ENCODE measurements at regions of chr1 and their contacts with region 1.

Region 1: GRCh38 chr1:202184750-202185460 is 8.7 kb upstream of the LGR6 start:
- DNase-seq: peak; percentile 94
- H3K4me3 Mint-ChIP-seq: peak overlapping the region; percentile 52
- H3K27ac Mint-ChIP-seq: no peak overlapping the region
- H3K4me1 Mint-ChIP-seq: peaks cover 8% of the 10 kb centered on the region
- H3K27me3 Mint-ChIP-seq: peaks cover 88% of the 10 kb centered on the region
- CTCF ChIP-seq: peak; percentile 89

Region 2: GRCh38 chr1:202200112-202200566 is 15.2 kb after region 1 on chr1:
- CTCF ChIA-PET with region 1: interaction called, 14 read pairs
- intact Hi-C with region 1: no loop called
- DNase-seq: peak; percentile 63
- H3K4me3 Mint-ChIP-seq: no peak overlapping the region
- H3K27ac Mint-ChIP-seq: peak overlapping the region; percentile 34
- H3K4me1 Mint-ChIP-seq: peaks cover 37% of the 10 kb centered on the region
- H3K27me3 Mint-ChIP-seq: peaks cover 38% of the 10 kb centered on the region
- CTCF ChIP-seq: no peak

Region 3: GRCh38 chr1:202315576-202316168 is 130.8 kb after region 1 on chr1:
- CTCF ChIA-PET with region 1: interaction called, 21 read pairs
- intact Hi-C with region 1: loop called (anchors 1 kb)
- DNase-seq: peak; percentile 88
- H3K4me3 Mint-ChIP-seq: no peak overlapping the region
- H3K27ac Mint-ChIP-seq: no peak overlapping the region
- H3K4me1 Mint-ChIP-seq: no peaks in the 10 kb centered on the region
- H3K27me3 Mint-ChIP-seq: peaks cover 50% of the 10 kb centered on the region
- CTCF ChIP-seq: peak; percentile 88

Region 4: GRCh38 chr1:202710070-202711045 is 525.5 kb after region 1 on chr1 and contains the start of gene SYT2:
- CTCF ChIA-PET with region 1: no interaction called
- intact Hi-C with region 1: loop called (anchors 10 kb)
- DNase-seq: peak; percentile 46
- H3K4me3 Mint-ChIP-seq: peak within 1 kb of the TSS; percentile 50
- H3K27ac Mint-ChIP-seq: no peak within 1 kb of the TSS
- H3K4me1 Mint-ChIP-seq: peaks cover 10% of the 10 kb centered on the region
- H3K27me3 Mint-ChIP-seq: peaks cover 85% of the 10 kb centered on the region
- CTCF ChIP-seq: no peak
- total RNA-seq, gene SYT2: not detected in 2 replicates

Region 5: DNA sequence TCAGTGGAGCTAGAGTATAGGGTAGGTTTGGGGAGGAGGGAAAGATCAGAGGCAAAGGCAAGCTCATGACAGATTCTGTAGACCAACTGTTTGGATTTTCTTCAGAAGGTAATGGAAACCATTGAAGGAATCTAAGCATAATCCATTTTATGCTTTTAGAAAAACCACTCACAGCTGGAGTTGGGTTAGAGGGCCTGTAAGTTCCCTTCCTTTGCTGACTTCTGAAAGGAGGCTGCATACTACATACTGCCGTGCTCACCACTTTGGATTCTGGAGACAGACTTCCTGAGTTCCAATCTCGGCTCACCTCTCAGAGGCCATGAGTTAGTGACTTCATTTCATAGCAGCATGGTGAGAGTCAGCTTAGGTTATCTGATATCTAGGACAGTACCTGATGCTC is 531.7 kb after region 1 on chr1:
- CTCF ChIA-PET with region 1: interaction called, 19 read pairs
- intact Hi-C with region 1: loop called (anchors 10 kb)
- DNase-seq: no peak
- H3K4me3 Mint-ChIP-seq: no peak overlapping the region
- H3K27ac Mint-ChIP-seq: no peak overlapping the region
- H3K4me1 Mint-ChIP-seq: peaks cover 10% of the 10 kb centered on the region
- H3K27me3 Mint-ChIP-seq: peaks cover 33% of the 10 kb centered on the region
- CTCF ChIP-seq: no peak